HCT116 (cell line): ENCODE measurements at regions of chr11 and their contacts with region 1.

Region 1: DNA sequence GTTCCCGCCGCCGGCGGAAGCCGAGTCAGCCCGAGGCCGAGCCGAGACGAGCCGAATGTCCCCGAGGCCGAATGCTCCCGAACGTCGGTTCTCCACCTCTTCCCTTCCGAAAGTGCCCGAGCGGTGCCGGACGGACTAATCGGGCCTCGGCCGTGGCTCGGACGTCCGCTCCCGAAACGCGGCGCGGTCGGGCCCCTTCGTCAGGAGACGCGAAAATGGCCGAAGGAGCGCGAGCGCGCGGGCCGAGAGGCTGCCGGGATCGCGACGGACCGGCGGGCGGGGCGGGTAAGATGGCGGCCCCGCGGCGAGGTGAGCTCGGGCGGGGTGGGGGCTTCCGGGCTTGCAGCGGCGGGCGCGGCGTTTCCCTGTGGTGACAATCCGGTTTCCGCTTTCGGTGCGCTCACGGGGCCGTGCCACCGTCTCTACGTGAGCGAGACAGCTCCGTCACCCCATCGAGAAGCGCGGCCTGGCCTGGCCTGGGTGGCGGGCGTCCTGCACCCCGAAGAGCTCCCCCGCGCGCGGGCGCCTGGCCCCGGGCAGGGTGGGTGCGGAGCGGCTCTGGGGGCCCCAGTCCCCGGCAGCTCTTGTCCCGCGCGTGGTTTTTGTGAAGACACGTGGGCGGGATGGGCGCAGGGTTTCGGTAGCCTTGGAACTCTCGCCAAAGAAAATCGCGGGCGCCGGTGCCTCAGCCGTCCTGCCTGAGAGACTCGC is at the start of gene TMEM80:
- DNase-seq: peak; percentile 96
- ATAC-seq: peak; percentile 86
- H3K4me3 ChIP-seq: peak within 1 kb of the TSS; percentile 75 to 94
- H3K27ac ChIP-seq: peak within 1 kb of the TSS; percentile 99
- H3K4me1 ChIP-seq: peaks cover 8 to 34% of the 10 kb centered on the region in 2 experiments
- H3K27me3 ChIP-seq: no peaks in the 10 kb centered on the region
- CTCF ChIP-seq: no peak
- POLR2A ChIP-seq: peak; percentile 45
- RAD21 ChIP-seq: no peak
- total RNA-seq, gene TMEM80: 18.4 TPM

Region 2: DNA sequence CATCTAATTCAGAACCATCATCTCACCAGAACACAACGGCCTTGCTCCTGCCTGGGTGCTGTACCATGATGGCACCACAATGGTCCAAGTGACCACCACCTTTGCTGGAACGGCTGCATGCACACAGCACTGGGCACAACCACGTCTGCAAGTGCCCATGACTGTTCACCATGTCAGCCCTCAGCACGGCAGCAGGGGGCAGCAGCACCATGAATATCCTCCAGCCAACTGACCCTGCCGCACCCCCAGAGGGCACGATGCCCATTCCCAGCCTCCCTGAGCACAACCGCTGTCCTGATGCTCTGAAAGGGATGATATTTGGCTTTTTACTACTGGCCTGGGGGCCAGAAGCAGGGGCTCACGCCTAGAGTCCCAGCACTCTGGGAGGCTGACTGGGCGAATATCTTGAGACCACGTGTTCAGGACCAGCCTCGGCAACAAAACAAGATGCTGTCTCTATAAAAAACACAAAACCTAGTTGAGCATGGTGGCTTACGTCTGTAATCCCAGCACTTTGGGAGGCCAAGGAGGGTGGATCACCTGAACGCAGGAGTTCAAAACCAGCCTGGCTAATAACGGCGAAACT is 32.9 kb before region 1 on chr11:
- CTCF ChIA-PET with region 1: no interaction called
- POLR2A ChIA-PET with region 1: no interaction called
- RAD21 ChIA-PET with region 1: no interaction called
- intact Hi-C with region 1: no loop called
- DNase-seq: peak; percentile 48
- ATAC-seq: peak; percentile 98
- H3K4me3 ChIP-seq: no peak overlapping the region
- H3K27ac ChIP-seq: no peak overlapping the region
- H3K4me1 ChIP-seq: no peaks in the 10 kb centered on the region
- H3K27me3 ChIP-seq: no peaks in the 10 kb centered on the region
- CTCF ChIP-seq: peak; percentile 85 to 90 (median 88)
- POLR2A ChIP-seq: no peak
- RAD21 ChIP-seq: peak; percentile 89

Region 3: DNA sequence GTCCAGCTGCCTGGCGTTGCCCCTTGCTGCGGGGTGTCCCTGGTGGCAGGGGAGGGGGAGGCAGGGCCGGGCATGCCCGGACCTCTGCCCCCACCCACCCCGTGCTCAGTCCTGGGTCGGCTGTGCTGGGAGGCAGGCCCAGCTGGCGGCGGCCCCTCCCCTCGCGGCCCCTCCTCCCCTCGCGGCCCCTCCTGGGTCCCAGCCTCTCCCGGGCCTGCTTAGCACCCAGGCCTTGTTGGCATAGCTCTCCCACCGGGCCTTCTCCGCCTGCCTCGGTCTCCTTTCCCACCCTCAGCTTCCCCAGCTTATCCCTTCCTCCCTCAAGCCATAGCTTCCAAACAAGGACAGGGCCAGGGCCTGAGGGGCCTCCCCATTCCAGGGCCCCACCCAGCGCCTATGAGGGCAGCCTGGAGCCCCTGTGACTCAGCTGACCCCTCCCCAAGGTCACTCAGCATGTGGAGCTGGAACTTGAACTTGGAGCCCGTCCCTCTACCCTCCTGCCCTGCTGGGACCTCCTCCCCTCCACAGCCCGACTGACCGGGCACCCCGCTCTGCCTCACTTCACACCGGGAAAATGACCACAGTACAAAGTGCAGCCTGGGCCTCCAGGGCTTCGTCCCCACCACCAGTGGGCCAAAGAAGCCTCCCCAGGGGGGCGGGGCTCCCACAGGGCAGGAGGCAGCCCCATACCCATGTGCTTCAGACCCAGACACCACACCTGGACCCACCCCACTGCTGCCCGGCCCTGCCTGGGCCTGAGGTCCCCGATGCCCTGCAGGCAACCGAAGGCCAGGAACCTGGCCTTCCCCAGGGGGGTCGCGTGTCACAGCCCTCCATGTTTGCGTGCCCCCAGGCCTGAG is 11.5 kb after region 1 on chr11:
- CTCF ChIA-PET with region 1: interaction called, 24 read pairs
- POLR2A ChIA-PET with region 1: interaction called, 6 read pairs
- RAD21 ChIA-PET with region 1: interaction called in 1 of 2 experiments, 3 read pairs
- intact Hi-C with region 1: no loop called
- DNase-seq: no peak
- ATAC-seq: peak; percentile 62
- H3K4me3 ChIP-seq: peak overlapping the region; percentile 87 to 96
- H3K27ac ChIP-seq: peak overlapping the region; percentile 99
- H3K4me1 ChIP-seq: peaks cover 41 to 64% of the 10 kb centered on the region in 2 experiments
- H3K27me3 ChIP-seq: no peaks in the 10 kb centered on the region
- CTCF ChIP-seq: peak in 2 of 3 experiments; percentile 15 to 34; a peak in 2 of 6 replicates
- POLR2A ChIP-seq: no peak
- RAD21 ChIP-seq: no peak